PC-9 (cell line): ENCODE measurements at regions of chr2 and their contacts with region 1.

Region 1: GRCh38 chr2:102604746-102605145 is 14.6 kb upstream of the SLC9A2 start:
- DNase-seq: peak in 1 of 2 experiments; percentile 43
- H3K4me3 ChIP-seq: no peak overlapping the region
- H3K27ac ChIP-seq: peak overlapping the region; percentile 48
- H3K4me1 ChIP-seq: peaks cover 30% of the 10 kb centered on the region
- H3K27me3 ChIP-seq: no peaks in the 10 kb centered on the region
- CTCF ChIP-seq: no peak

Region 2: GRCh38 chr2:102585847-102586431 is 18.8 kb before region 1 on chr2:
- CTCF ChIA-PET with region 1: no interaction called
- POLR2A ChIA-PET with region 1: interaction called, 4 read pairs
- intact Hi-C with region 1: loop called (anchors 1 kb)
- DNase-seq: peak; percentile 62 to 81
- H3K4me3 ChIP-seq: no peak overlapping the region
- H3K27ac ChIP-seq: peak overlapping the region; percentile 4; the same call in 1 of the 2 replicates
- H3K4me1 ChIP-seq: peaks cover 20% of the 10 kb centered on the region
- H3K27me3 ChIP-seq: no peaks in the 10 kb centered on the region
- CTCF ChIP-seq: no peak

Region 3: DNA sequence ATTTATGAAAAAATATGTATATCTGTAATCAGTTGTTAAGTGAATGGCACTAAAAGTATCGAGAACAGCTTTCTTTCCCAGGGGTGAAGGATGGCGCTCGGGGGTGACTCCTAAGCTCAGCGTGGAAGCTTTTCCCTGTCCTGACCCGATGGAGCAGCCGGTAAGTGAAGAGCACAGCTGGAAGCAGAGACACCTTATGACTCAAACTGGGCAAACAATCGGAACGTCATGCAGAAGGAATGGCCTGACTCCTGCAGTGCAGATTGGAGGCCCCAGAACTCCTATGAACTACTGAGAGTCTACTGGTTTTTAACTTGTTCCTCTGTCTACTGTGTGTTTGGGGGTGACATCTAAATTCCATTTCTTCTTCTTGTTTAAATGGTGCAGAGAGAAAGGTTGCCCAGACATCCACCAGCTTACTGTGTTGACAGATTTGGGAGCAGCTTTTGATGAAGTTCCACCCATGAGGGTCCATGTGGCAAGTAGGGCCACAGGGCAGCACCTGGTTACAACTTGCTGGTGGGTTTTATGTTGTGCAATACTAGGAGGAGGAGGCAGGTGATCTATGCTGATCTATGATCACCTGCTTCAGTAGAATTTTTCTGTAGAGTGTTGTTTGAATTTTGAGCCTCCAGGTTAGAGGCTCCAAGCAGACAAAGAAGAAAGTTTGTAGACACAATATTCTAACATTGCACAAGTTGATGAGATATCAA is 104.3 kb after region 1 on chr2:
- CTCF ChIA-PET with region 1: no interaction called
- POLR2A ChIA-PET with region 1: no interaction called
- intact Hi-C with region 1: no loop called
- DNase-seq: peak; percentile 47 to 60
- H3K4me3 ChIP-seq: no peak overlapping the region
- H3K27ac ChIP-seq: no peak overlapping the region
- H3K4me1 ChIP-seq: peaks cover 10% of the 10 kb centered on the region; the same call in 1 of the 2 replicates
- H3K27me3 ChIP-seq: no peaks in the 10 kb centered on the region
- CTCF ChIP-seq: no peak